Vagina (tissue), 2 donors: ENCODE measurements at regions of chr14 and their contacts with region 1.

Region 1: GRCh38 chr14:76045773-76046172 is 60.2 kb downstream of the IFT43 start:
- DNase-seq: no peak
- H3K4me3 ChIP-seq: no peak overlapping the region
- H3K27ac ChIP-seq: no peak overlapping the region
- H3K4me1 ChIP-seq: peaks cover 17% of the 10 kb centered on the region
- H3K27me3 ChIP-seq: no peaks in the 10 kb centered on the region
- CTCF ChIP-seq: no peak
- POLR2A ChIP-seq: no peak

Region 2: GRCh38 chr14:75906676-75907280 is 139.0 kb before region 1 on chr14:
- intact Hi-C with region 1: no loop called
- DNase-seq: no peak
- H3K4me3 ChIP-seq: no peak overlapping the region
- H3K27ac ChIP-seq: no peak overlapping the region
- H3K4me1 ChIP-seq: no peaks in the 10 kb centered on the region
- H3K27me3 ChIP-seq: no peaks in the 10 kb centered on the region
- CTCF ChIP-seq: peak; percentile 58 to 79 (median 69)
- POLR2A ChIP-seq: no peak

Region 3: GRCh38 chr14:76647697-76648298 is 602.0 kb after region 1 on chr14:
- intact Hi-C with region 1: loop called (anchors 10 kb)
- DNase-seq: no peak
- H3K4me3 ChIP-seq: no peak overlapping the region
- H3K27ac ChIP-seq: no peak overlapping the region
- H3K4me1 ChIP-seq: no peaks in the 10 kb centered on the region
- H3K27me3 ChIP-seq: no peaks in the 10 kb centered on the region
- CTCF ChIP-seq: peak; percentile 43 to 50 (median 45)
- POLR2A ChIP-seq: no peak